Tibial artery (tissue), 4 donors: ENCODE measurements at regions of chr3 and their contacts with region 1.

Region 1: GRCh38 chr3:106619-107018 is 89.9 kb upstream of the CHL1 start:
- DNase-seq: no peak
- H3K4me3 ChIP-seq: no peak overlapping the region
- H3K27ac ChIP-seq: no peak overlapping the region
- H3K4me1 ChIP-seq: no peaks in the 10 kb centered on the region
- H3K27me3 ChIP-seq: no peaks in the 10 kb centered on the region
- CTCF ChIP-seq: no peak

Region 2: GRCh38 chr3:59854-60253 is 46.8 kb before region 1 on chr3:
- intact Hi-C with region 1: loop called (anchors 2 kb)
- DNase-seq: no peak
- H3K4me3 ChIP-seq: no peak overlapping the region
- H3K27ac ChIP-seq: no peak overlapping the region
- H3K4me1 ChIP-seq: no peaks in the 10 kb centered on the region
- H3K27me3 ChIP-seq: no peaks in the 10 kb centered on the region
- CTCF ChIP-seq: no peak